ENCODE measurements at regions of chr11 and their contacts with region 1.

Region 1: GRCh38 chr11:75280227-75280701 is 39.7 kb downstream of the TPBGL start:
- DNase-seq: peak; percentile 87
- H3K4me3 ChIP-seq: no peak overlapping the region
- H3K27ac ChIP-seq: peak overlapping the region; percentile 1
- H3K4me1 ChIP-seq: peaks cover 29% of the 10 kb centered on the region
- H3K27me3 ChIP-seq: no peaks in the 10 kb centered on the region
- CTCF ChIP-seq: peak; percentile 95 to 97
- POLR2A ChIP-seq: no peak

Region 2: GRCh38 chr11:75293903-75294302 is 13.6 kb after region 1 on chr11:
- CTCF ChIA-PET with region 1: interaction called, 20 read pairs
- POLR2A ChIA-PET with region 1: no interaction called
- dilution Hi-C with region 1: no loop called
- intact Hi-C with region 1: loop called (anchors 1 kb)
- DNase-seq: no peak
- H3K4me3 ChIP-seq: no peak overlapping the region
- H3K27ac ChIP-seq: no peak overlapping the region
- H3K4me1 ChIP-seq: peaks cover 15% of the 10 kb centered on the region
- H3K27me3 ChIP-seq: no peaks in the 10 kb centered on the region
- CTCF ChIP-seq: no peak
- POLR2A ChIP-seq: no peak

Region 3: GRCh38 chr11:75313513-75314272 is 33.4 kb after region 1 on chr11:
- CTCF ChIA-PET with region 1: interaction called, 20 read pairs
- POLR2A ChIA-PET with region 1: interaction called, 4 read pairs
- dilution Hi-C with region 1: no loop called
- intact Hi-C with region 1: no loop called
- DNase-seq: peak; percentile 90
- H3K4me3 ChIP-seq: no peak overlapping the region
- H3K27ac ChIP-seq: peak overlapping the region; percentile 72
- H3K4me1 ChIP-seq: peaks cover 33% of the 10 kb centered on the region
- H3K27me3 ChIP-seq: no peaks in the 10 kb centered on the region
- CTCF ChIP-seq: no peak
- POLR2A ChIP-seq: peak; percentile 54

Region 4: DNA sequence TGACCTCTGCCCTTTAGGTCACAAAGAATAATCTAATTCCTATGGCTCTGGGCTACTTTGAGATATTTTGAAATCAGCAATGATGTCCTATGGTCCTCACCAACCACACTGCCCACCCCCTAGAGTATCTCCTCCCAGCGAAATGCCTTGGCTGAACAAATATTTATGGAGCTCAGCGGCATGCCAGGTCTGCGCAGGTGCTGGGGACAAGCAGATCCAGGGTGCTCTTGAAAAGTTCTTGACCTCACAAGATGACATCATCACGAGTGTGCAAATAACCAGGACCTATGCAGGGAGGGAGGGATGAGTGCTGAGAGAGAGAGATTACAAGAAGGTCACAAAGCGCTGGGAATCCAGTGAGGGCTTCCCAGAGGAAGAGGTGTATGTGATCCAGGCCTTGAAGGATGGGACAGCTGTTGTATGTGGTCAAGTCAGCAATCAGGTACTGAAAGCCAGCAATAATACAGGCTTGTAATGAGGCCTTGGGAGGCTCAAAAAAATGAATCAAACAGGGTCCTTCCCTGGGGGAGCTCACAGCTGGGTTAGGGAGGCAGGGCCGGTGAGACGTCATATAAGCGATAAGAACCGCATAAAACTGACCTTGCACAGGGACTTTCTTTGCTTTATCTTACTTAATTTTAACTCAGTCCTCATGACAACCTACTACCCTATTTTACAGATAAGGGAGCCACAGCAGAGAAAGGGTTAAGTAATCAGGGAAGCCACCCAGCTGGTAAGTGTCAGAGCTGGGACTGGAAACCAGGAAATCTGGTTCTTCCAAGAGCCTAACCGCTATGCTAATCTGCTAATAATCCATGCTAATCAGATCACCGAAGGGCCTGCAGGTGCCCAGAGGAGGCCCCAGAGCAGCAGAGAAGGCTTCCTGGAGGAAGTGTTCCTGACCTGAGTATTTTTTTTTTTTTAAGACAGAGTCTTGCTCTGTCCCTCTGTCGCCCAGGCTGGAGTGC is 62.9 kb after region 1 on chr11:
- CTCF ChIA-PET with region 1: interaction called, 28 read pairs
- POLR2A ChIA-PET with region 1: no interaction called
- dilution Hi-C with region 1: no loop called
- intact Hi-C with region 1: no loop called
- DNase-seq: peak; percentile 30
- H3K4me3 ChIP-seq: no peak overlapping the region
- H3K27ac ChIP-seq: no peak overlapping the region
- H3K4me1 ChIP-seq: peaks cover 69% of the 10 kb centered on the region
- H3K27me3 ChIP-seq: no peaks in the 10 kb centered on the region
- CTCF ChIP-seq: no peak
- POLR2A ChIP-seq: no peak

Region 5: GRCh38 chr11:75371941-75372789 is 91.9 kb after region 1 on chr11:
- CTCF ChIA-PET with region 1: interaction called, 15 read pairs
- POLR2A ChIA-PET with region 1: no interaction called
- dilution Hi-C with region 1: no loop called
- intact Hi-C with region 1: no loop called
- DNase-seq: no peak
- H3K4me3 ChIP-seq: no peak overlapping the region
- H3K27ac ChIP-seq: no peak overlapping the region
- H3K4me1 ChIP-seq: peaks cover 14% of the 10 kb centered on the region
- H3K27me3 ChIP-seq: no peaks in the 10 kb centered on the region
- CTCF ChIP-seq: no peak
- POLR2A ChIP-seq: no peak